ENCODE measurements at regions of chr1 and their contacts with region 1.

Region 1: DNA sequence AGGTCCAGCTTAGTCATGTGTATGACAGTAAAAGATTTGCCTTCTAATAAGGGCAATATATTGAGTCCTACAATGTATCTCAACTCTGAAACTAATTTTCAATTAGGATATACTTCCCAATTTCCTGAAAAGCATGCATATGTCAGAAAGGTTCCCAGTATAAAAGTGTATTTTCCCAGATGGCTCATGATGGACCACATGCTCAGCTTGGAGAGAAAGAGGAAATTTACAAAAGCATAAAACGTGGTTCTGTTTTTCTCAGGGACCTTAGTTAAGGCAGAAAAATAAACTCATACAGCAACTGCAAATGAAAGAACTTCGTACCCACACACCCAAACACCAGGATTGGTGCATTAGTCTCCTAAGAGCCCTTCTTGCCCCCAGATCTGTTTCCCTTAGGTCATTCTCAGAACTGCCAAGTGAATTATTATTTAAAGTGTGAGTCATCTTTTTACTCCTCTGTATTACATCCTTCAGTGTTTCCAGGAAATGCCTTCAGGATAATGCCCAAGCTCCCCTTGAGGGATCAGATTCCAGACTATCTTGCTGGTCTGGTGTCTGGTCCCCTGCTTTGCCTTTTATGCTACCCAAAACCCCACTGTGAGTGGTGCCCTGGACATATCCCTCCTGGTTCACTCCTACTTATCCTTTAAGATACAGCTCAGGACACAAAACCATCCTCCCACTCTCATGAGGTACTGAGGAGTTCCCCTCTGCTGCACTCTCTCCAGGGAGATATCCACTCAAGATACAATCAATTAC is 57.4 kb downstream of the SSX2IP start:
- DNase-seq: no peak
- ATAC-seq: no peak
- H3K4me3 ChIP-seq: no peak overlapping the region
- H3K27ac ChIP-seq: no peak overlapping the region
- H3K4me1 ChIP-seq: no peaks in the 10 kb centered on the region
- H3K27me3 ChIP-seq: peaks cover 0 to 7% (median 0%) of the 10 kb centered on the region in 3 donors
- CTCF ChIP-seq: no peak

Region 2: GRCh38 chr1:84620720-84621313 is 12.0 kb before region 1 on chr1:
- intact Hi-C with region 1: no loop called
- DNase-seq: peak; percentile 74 to 87
- ATAC-seq: peak; percentile 92 to 98 (median 95)
- H3K4me3 ChIP-seq: peak overlapping the region; percentile 74
- H3K27ac ChIP-seq: no peak overlapping the region
- H3K4me1 ChIP-seq: no peaks in the 10 kb centered on the region
- H3K27me3 ChIP-seq: no peaks in the 10 kb centered on the region
- CTCF ChIP-seq: peak; percentile 95

Region 3: DNA sequence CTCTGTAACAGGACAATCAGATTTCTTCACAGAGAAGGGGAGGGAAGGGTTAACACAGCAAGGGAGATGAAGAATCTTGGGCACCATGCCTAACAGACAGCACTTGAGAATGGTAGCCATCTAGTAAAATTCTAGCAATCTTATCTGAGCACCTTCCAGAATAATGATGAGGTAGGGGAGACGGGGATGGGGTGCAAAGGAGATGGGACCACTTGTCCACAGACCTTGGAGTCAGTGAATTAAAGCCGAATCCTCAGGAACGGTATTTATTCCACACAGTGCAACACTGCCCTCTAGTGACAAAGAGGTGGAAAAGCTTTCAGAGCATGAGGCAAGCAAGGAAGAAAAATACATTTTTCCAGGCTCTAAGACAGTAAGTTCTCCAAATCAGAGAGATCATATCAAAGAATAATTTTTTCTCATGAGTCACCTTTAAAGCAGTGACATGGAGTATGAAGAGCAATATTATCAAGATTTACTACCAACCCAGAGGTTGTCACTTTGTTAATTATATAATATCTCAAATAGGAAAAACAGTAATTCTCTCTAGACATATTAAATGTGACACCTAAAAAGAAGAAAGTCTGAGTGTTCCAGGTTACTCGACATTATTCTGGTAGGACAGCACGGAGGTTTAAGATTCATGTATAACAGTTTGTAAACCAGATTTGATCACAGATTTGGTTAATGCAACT is 303.4 kb after region 1 on chr1:
- intact Hi-C with region 1: loop called in 1 of 2 experiments (anchors 10 kb)
- DNase-seq: no peak
- ATAC-seq: peak; percentile 66 to 85 (median 73)
- H3K4me3 ChIP-seq: no peak overlapping the region
- H3K27ac ChIP-seq: no peak overlapping the region
- H3K4me1 ChIP-seq: no peaks in the 10 kb centered on the region
- H3K27me3 ChIP-seq: peaks cover 0 to 3% (median 0%) of the 10 kb centered on the region in 3 donors
- CTCF ChIP-seq: peak; percentile 89